ENCODE measurements at regions of chr9 and their contacts with region 1.

Region 1: DNA sequence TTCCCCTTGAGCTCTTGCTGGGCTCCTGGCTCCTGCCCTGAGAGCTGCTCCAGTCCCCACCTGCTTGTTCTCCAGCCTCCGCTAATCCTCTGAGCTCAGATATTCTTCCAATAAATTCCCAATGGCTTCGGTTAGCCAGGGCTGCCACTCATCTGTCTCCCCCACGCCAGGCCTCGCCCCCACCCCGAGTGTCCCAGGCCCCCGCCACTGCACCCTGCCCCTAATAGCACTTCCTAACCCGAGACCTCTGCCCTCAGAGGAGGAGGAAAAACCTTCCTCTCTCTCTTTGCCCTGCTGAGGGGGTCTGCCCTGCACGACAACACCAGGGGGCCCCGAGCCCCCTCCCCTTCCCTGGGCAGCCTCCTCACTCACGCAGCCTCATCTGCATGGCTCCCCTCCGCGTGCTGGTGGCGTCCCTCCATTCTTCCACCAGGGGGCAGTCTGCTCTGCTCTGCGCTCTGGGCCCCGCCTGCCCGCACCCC is 5.4 kb upstream of the LCN15 start:
- DNase-seq: no peak
- H3K4me3 ChIP-seq: no peak overlapping the region
- CTCF ChIP-seq: peak; percentile 63

Region 2: DNA sequence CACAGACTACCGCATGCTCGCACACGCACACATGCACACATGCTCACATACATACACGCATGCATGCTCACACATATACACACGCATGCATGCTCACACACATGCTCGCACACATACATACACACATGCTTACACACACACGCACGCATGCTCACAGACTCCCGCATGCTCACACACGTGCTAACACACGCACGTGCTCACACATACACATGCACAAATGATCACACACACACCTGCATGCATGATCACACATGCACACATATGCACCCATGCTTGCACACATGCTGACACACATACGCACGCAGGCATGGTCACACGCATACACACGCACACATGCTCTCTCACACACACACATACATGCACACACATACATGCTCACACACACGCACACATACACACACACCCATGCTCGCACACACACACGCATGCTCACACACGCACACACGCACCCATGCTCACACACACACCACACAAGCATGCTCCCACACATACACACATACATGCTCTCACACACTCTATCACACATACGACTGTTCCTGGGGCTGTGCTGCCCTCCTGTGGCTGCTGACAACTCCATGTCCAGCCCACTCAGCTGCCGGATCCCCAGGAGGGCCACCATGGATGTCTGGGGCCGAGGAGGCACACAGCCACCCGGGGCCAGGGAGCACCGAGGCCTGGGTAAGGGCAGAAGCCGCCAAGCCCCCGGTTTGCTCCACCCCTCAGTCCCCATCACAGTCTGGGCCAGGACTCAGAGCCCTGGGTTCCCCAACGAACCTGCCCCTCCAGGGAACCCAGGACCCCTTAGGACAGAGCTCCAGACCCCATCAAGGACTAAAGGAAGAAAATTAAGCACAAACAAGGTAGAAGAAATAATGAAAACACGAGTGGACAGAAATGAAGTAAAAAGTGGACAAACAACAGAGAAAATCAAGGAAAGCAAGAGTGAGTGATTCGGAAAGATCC is 138.4 kb before region 1 on chr9:
- CTCF ChIA-PET with region 1: no interaction called
- POLR2A ChIA-PET with region 1: no interaction called
- DNase-seq: no peak
- H3K4me3 ChIP-seq: no peak overlapping the region
- CTCF ChIP-seq: peak; percentile 93

Region 3: DNA sequence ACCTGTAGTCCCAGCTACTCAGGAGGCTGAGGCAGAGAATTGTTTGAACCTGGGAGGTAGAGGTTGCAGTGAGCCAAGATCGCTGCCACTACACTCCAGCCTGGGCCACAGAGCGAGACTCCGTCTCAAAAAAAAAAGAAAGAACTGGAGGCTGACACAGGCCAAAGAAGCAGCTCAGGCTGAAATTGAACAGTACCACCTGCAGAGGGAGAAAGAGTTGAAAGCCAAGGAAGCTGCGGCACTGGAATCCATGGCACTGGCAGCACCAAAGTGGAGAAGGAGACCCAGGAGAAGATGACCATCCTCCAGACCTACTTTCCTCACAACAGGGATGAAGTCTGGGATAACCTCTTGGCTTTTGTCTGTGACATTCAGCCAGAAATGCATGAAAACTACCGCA is 10.1 kb after region 1 on chr9:
- CTCF ChIA-PET with region 1: interaction called, 64 read pairs
- POLR2A ChIA-PET with region 1: no interaction called
- DNase-seq: no peak
- H3K4me3 ChIP-seq: no peak overlapping the region
- CTCF ChIP-seq: peak; percentile 1

Region 4: GRCh38 chr9:136790927-136791641 is 21.3 kb after region 1 on chr9 and contains the start of gene TMEM141:
- CTCF ChIA-PET with region 1: interaction called, 64 read pairs
- POLR2A ChIA-PET with region 1: no interaction called
- DNase-seq: peak; percentile 93
- H3K4me3 ChIP-seq: peak within 1 kb of the TSS; percentile 94
- CTCF ChIP-seq: no peak

Measured in AG04449 (cell line).